IMR-90 (cell line): ENCODE measurements at regions of chr1 and their contacts with region 1.

Region 1: GRCh38 chr1:26874896-26875295 is 11.9 kb downstream of the SFN start:
- DNase-seq: no peak
- ATAC-seq: no peak
- H3K4me3 ChIP-seq: no peak overlapping the region
- H3K27ac ChIP-seq: no peak overlapping the region
- H3K4me1 ChIP-seq: no peaks in the 10 kb centered on the region
- H3K27me3 ChIP-seq: no peaks in the 10 kb centered on the region
- CTCF ChIP-seq: no peak
- POLR2A ChIP-seq: no peak
- RAD21 ChIP-seq: no peak

Region 2: GRCh38 chr1:26602378-26602959 is 272.4 kb before region 1 on chr1:
- CTCF ChIA-PET with region 1: interaction called, 3 read pairs
- POLR2A ChIA-PET with region 1: no interaction called
- dilution Hi-C with region 1: no loop called
- in situ Hi-C with region 1: loop called (anchors 10 kb)
- intact Hi-C with region 1: loop called (anchors 1 kb)
- DNase-seq: peak; percentile 68
- ATAC-seq: peak; percentile 72
- H3K4me3 ChIP-seq: no peak overlapping the region
- H3K27ac ChIP-seq: no peak overlapping the region
- H3K4me1 ChIP-seq: no peaks in the 10 kb centered on the region
- H3K27me3 ChIP-seq: peaks cover 23% of the 10 kb centered on the region
- CTCF ChIP-seq: peak; percentile 95
- POLR2A ChIP-seq: no peak
- RAD21 ChIP-seq: peak; percentile 97

Region 3: DNA sequence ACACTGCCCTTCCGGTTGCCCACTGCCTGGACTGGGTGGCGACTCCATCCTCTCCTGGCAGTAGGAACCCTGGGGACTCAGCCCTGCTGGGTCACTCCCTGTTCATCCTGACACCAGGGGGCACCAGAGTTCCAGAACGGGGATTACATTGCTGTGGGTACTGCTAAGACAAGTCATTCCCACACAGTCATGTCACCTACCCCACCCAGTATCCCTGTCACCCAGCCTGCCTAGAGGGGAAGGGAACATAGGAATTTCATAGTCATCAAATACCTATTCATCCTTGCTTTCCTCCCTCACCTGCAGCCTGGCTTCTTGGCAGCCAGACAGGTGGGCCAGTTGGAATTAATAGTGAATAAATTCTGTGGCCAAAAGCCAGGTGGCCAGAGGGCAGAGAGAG is 21.7 kb before region 1 on chr1:
- CTCF ChIA-PET with region 1: interaction called, 3 read pairs
- POLR2A ChIA-PET with region 1: no interaction called
- dilution Hi-C with region 1: no loop called
- in situ Hi-C with region 1: no loop called
- intact Hi-C with region 1: loop called (anchors 1 kb)
- DNase-seq: peak; percentile 80
- ATAC-seq: peak; percentile 87
- H3K4me3 ChIP-seq: no peak overlapping the region
- H3K27ac ChIP-seq: no peak overlapping the region
- H3K4me1 ChIP-seq: peaks cover 10% of the 10 kb centered on the region
- H3K27me3 ChIP-seq: no peaks in the 10 kb centered on the region
- CTCF ChIP-seq: peak; percentile 88
- POLR2A ChIP-seq: 0 out of 2 replicates have a peak, but pooled peaks have one; percentile 40
- RAD21 ChIP-seq: peak; percentile 86

Region 4: DNA sequence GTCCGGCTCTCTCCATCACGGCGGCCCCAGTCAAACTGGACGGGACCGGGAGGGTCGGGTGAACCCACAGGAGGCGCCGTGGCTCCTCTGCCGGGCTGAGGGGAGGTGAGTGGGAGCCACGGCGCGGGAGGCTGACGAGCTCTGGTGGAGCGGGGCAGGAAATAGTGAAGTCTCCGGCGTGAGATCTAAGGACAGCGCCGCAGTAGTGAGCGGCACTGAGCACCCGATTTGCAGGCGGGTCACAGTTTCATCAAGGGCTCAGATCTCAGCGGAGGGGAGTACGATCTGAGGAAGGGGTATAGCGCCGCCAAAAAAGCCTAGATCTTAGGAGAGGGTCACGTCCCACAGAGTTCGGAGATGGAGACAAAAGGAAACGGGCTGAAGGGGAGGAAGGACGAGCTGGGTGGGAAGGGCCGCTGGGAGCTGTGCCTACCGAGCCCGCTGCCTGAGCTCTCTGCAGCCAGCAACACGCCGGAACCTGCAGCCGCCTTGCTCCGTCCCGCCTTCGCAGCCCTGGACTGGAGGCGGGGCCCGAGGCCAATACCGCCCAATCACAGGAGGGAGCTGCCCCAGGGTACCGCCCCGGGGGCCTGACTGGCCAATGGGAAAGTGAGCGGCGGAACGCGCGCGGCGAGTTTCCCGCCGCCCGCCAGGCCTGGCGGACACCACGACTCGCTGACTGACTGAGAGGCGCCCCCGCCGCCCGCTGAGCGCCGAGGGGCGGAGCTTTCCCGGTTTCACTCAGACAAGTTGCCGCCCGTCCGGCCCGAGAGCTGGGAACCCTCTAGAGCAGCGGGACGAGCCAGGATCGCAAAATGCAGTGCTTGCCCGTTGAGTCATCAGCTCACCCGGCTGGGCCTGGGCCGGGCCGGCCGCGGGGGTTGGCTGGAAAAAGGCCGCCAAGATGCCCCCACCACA is 10.0 kb before region 1 on chr1:
- CTCF ChIA-PET with region 1: no interaction called
- POLR2A ChIA-PET with region 1: no interaction called
- dilution Hi-C with region 1: no loop called
- in situ Hi-C with region 1: no loop called
- intact Hi-C with region 1: loop called (anchors 2 kb)
- DNase-seq: peak; percentile 97
- ATAC-seq: peak; percentile 96
- H3K4me3 ChIP-seq: peak overlapping the region; percentile 62
- H3K27ac ChIP-seq: peak overlapping the region; percentile 100
- H3K4me1 ChIP-seq: peaks cover 4% of the 10 kb centered on the region
- H3K27me3 ChIP-seq: no peaks in the 10 kb centered on the region
- CTCF ChIP-seq: no peak
- POLR2A ChIP-seq: peak; percentile 78
- RAD21 ChIP-seq: no peak

Region 5: DNA sequence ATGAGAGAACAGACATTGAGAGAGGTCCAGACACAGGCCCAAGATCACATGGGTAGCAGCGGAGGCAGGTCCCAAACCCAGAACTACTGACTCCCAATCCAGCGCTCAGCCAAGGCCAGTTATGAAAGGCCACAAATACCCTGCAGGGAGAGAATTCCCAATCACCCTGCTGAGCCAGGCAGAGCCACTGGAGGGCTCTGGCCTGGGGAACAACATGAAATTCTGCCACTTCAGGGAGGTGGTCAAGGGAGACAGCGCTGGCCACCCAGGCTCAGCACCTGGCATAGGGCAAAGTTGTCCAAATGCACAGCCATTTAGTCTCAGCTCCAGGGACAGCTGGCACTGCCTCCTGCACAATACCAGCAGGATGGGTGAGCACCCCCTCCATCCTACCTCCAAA is 252.5 kb after region 1 on chr1:
- CTCF ChIA-PET with region 1: no interaction called
- POLR2A ChIA-PET with region 1: no interaction called
- dilution Hi-C with region 1: no loop called
- in situ Hi-C with region 1: no loop called
- intact Hi-C with region 1: no loop called
- DNase-seq: no peak
- ATAC-seq: no peak
- H3K4me3 ChIP-seq: no peak overlapping the region
- H3K27ac ChIP-seq: no peak overlapping the region
- H3K4me1 ChIP-seq: peaks cover 1% of the 10 kb centered on the region
- H3K27me3 ChIP-seq: no peaks in the 10 kb centered on the region
- CTCF ChIP-seq: 0 out of 2 replicates have a peak, but pooled peaks have one; percentile 20
- POLR2A ChIP-seq: no peak
- RAD21 ChIP-seq: 0 out of 2 replicates have a peak, but pooled peaks have one; percentile 6